Activated T-helper 1 cell treated with anti-CD3 and anti-CD28 coated beads, Interleukin-12 subunit alpha, Interleukin-12 subunit beta, Interleukin-2, Interleukin-4 antibody, amounts not matched to agents 30 ng/mL and 10 ng/mL and 1 ng/mL, durations not matched to agents 14 hours and 24 hours and 36 hours (primary cell): ENCODE measurements at regions of chr11 and their contacts with region 1.

Region 1: DNA sequence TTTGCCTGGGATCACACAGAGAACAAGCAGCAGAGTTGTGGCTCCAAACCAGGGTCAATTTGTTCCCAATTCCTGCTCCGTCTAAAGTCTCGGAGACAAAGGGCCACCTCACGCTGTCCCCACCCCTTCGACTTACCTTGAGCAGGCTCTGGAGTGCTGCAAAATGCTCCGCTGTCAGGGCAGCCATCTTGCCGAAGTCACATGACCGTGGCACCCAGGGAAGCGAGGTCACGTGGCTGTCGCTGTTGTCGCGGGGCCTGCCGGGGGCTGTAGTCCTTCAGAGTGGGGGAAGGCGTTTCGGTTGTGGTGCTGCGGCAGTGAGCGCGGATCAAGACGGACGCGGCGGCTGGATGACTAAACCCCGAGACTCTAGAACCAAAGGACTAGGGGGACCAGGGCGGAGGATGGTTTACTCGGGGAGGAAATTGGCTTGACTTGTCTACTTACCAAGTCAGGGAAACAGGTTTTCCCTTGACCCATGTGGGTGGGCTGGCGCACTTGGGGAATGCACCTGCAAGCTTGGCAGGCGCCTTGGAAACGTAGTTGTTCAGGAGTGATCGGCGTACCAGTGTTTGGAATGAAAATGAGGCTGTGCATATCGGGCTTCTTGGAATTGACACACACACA is at the start of gene COMMD9:
- DNase-seq: peak; percentile 93
- H3K4me3 Mint-ChIP-seq: peak within 1 kb of the TSS; percentile 94
- H3K27ac Mint-ChIP-seq: peak within 1 kb of the TSS; percentile 78
- H3K4me1 Mint-ChIP-seq: peaks cover 27% of the 10 kb centered on the region
- H3K27me3 Mint-ChIP-seq: no peaks in the 10 kb centered on the region
- total RNA-seq, gene COMMD9: 39.7 and 41.3 TPM in 2 replicates

Region 2: GRCh38 chr11:35822815-35823495 is 466.4 kb before region 1 on chr11:
- intact Hi-C with region 1: loop called (anchors 1 kb)
- DNase-seq: no peak
- H3K4me3 Mint-ChIP-seq: no peak overlapping the region
- H3K27ac Mint-ChIP-seq: no peak overlapping the region
- H3K4me1 Mint-ChIP-seq: no peaks in the 10 kb centered on the region
- H3K27me3 Mint-ChIP-seq: peaks cover 2% of the 10 kb centered on the region

Region 3: GRCh38 chr11:36306888-36307287 is 17.5 kb after region 1 on chr11:
- intact Hi-C with region 1: loop called (anchors 1 kb)
- DNase-seq: no peak
- H3K4me3 Mint-ChIP-seq: no peak overlapping the region
- H3K27ac Mint-ChIP-seq: no peak overlapping the region
- H3K4me1 Mint-ChIP-seq: peaks cover 9% of the 10 kb centered on the region
- H3K27me3 Mint-ChIP-seq: peaks cover 6% of the 10 kb centered on the region

Region 4: GRCh38 chr11:36478700-36479329 is 189.5 kb after region 1 on chr11:
- intact Hi-C with region 1: loop called (anchors 1 kb)
- DNase-seq: peak; percentile 14
- H3K4me3 Mint-ChIP-seq: no peak overlapping the region
- H3K27ac Mint-ChIP-seq: no peak overlapping the region
- H3K4me1 Mint-ChIP-seq: peaks cover 11% of the 10 kb centered on the region
- H3K27me3 Mint-ChIP-seq: no peaks in the 10 kb centered on the region

Region 5: GRCh38 chr11:36509694-36510566 is 220.6 kb after region 1 on chr11 and contains the start of gene TRAF6:
- intact Hi-C with region 1: loop called (anchors 1 kb)
- DNase-seq: peak; percentile 83
- H3K4me3 Mint-ChIP-seq: peak within 1 kb of the TSS; percentile 97
- H3K27ac Mint-ChIP-seq: peak within 1 kb of the TSS; percentile 91
- H3K4me1 Mint-ChIP-seq: peaks cover 30% of the 10 kb centered on the region
- H3K27me3 Mint-ChIP-seq: peaks cover 9% of the 10 kb centered on the region
- total RNA-seq, gene TRAF6: 10.5 and 11.1 TPM in 2 replicates

Region 6: GRCh38 chr11:36672813-36673450 is 383.6 kb after region 1 on chr11:
- intact Hi-C with region 1: loop called (anchors 1 kb)
- DNase-seq: no peak
- H3K4me3 Mint-ChIP-seq: no peak overlapping the region
- H3K27ac Mint-ChIP-seq: no peak overlapping the region
- H3K4me1 Mint-ChIP-seq: no peaks in the 10 kb centered on the region
- H3K27me3 Mint-ChIP-seq: peaks cover 3% of the 10 kb centered on the region